ENCODE measurements at regions of chr14 and their contacts with region 1.

Region 1: GRCh38 chr14:92951912-92952471 is 29.0 kb downstream of the CHGA start:
- DNase-seq: peak; percentile 79
- ATAC-seq: peak; percentile 98
- H3K4me3 Mint-ChIP-seq: no peak overlapping the region
- H3K27ac Mint-ChIP-seq: no peak overlapping the region
- H3K4me1 Mint-ChIP-seq: peaks cover 4% of the 10 kb centered on the region
- H3K27me3 Mint-ChIP-seq: no peaks in the 10 kb centered on the region
- CTCF ChIP-seq: peak; percentile 95

Region 2: GRCh38 chr14:93132470-93133065 is 180.6 kb after region 1 on chr14:
- CTCF ChIA-PET with region 1: interaction called, 22 read pairs
- POLR2A ChIA-PET with region 1: no interaction called
- intact Hi-C with region 1: loop called (anchors 1 kb)
- DNase-seq: no peak
- ATAC-seq: peak; percentile 52
- H3K4me3 Mint-ChIP-seq: no peak overlapping the region
- H3K27ac Mint-ChIP-seq: no peak overlapping the region
- H3K4me1 Mint-ChIP-seq: no peaks in the 10 kb centered on the region
- H3K27me3 Mint-ChIP-seq: no peaks in the 10 kb centered on the region
- CTCF ChIP-seq: no peak

Region 3: DNA sequence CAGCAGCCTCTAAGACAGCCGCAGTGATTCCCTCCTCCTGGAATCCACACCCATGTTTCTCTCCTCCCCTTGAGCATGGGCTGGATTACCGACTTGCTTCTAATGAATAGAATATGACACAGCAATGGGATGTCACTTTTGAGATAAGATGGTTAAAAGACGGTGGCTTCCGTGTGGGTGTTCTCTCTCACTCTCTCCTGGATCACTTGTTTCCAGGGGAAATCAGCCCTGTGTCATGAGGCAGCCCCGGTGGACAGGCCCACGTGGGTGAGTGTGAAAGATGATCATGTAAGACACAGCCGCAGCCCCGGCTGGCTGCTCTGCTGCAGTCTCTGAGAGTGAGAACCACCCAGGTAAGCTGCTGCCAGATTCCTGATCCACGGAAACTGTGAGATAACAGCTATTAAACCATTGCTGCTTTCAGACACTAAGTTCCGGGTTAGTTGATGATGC is 222.0 kb after region 1 on chr14:
- CTCF ChIA-PET with region 1: interaction called, 16 read pairs
- POLR2A ChIA-PET with region 1: no interaction called
- intact Hi-C with region 1: loop called (anchors 1 kb)
- DNase-seq: no peak
- ATAC-seq: no peak
- H3K4me3 Mint-ChIP-seq: no peak overlapping the region
- H3K27ac Mint-ChIP-seq: no peak overlapping the region
- H3K4me1 Mint-ChIP-seq: no peaks in the 10 kb centered on the region
- H3K27me3 Mint-ChIP-seq: peaks cover 5% of the 10 kb centered on the region
- CTCF ChIP-seq: no peak

Region 4: DNA sequence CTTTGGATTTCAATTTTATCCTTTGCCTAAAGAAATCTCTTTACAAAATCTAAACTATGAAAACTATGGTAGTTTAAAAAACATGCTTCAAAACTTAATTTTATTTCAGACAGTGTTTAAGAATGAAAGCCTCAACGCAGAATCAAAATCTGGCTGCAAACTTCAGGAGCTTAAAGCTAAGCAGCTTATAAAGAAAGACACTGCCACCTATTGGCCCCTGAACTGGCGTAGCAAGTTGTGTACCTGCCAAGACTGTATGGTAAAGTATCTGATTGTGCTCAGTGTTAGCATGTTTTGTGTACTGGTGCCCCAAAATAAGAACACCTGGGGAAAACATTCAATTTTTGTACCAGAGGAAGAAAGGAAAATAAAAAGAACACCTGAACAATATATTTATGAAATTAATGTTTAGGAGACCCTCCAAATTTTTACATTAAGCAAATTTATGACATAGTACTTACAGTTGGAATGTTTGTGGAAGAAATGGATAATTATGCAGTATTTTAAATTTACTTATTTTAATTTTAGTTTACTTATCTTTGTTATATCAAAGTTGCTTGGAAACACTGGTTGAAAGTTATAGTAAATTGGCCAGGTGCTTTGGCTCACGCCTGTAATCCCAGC is 267.2 kb after region 1 on chr14:
- CTCF ChIA-PET with region 1: no interaction called
- POLR2A ChIA-PET with region 1: no interaction called
- intact Hi-C with region 1: loop called (anchors 1 kb)
- DNase-seq: no peak
- ATAC-seq: peak; percentile 67
- H3K4me3 Mint-ChIP-seq: no peak overlapping the region
- H3K27ac Mint-ChIP-seq: no peak overlapping the region
- H3K4me1 Mint-ChIP-seq: no peaks in the 10 kb centered on the region
- H3K27me3 Mint-ChIP-seq: no peaks in the 10 kb centered on the region
- CTCF ChIP-seq: no peak

Region 5: DNA sequence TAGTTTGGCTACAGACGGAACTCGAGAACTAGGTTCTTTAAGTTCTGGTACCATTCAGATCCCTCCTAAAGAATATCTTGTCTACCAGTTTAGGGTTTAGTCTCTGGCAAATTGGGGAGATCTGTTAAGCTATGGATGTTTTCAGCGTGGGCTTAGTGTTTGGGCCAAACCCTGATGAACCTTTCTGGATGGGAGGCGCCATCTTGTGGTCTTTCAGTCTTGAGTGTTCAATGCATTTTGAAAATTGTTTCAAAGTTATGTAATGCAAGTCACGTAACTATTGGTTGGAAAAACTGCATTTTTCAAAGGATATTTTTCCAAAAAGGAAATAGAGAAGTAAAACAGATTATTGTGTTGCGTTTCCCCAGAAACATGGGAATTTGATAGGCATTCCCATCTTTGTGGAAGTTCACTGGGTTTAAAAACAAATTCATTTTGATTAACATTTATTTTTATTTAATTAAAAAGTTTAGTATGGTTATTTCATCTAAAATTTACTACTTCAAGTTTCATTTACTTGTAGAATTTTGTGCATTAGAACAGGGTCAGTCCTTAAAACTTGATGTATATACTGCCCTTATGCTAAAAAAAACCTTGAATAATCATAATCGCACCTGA is 667.3 kb after region 1 on chr14:
- CTCF ChIA-PET with region 1: interaction called, 4 read pairs
- POLR2A ChIA-PET with region 1: no interaction called
- intact Hi-C with region 1: loop called (anchors 1 kb)
- DNase-seq: no peak
- ATAC-seq: no peak
- H3K4me3 Mint-ChIP-seq: no peak overlapping the region
- H3K27ac Mint-ChIP-seq: no peak overlapping the region
- H3K4me1 Mint-ChIP-seq: no peaks in the 10 kb centered on the region
- H3K27me3 Mint-ChIP-seq: peaks cover 4% of the 10 kb centered on the region
- CTCF ChIP-seq: peak; percentile 46